Sciatic nerve (tissue), 2 donors: ENCODE measurements at regions of chr1 and their contacts with region 1.

Region 1: DNA sequence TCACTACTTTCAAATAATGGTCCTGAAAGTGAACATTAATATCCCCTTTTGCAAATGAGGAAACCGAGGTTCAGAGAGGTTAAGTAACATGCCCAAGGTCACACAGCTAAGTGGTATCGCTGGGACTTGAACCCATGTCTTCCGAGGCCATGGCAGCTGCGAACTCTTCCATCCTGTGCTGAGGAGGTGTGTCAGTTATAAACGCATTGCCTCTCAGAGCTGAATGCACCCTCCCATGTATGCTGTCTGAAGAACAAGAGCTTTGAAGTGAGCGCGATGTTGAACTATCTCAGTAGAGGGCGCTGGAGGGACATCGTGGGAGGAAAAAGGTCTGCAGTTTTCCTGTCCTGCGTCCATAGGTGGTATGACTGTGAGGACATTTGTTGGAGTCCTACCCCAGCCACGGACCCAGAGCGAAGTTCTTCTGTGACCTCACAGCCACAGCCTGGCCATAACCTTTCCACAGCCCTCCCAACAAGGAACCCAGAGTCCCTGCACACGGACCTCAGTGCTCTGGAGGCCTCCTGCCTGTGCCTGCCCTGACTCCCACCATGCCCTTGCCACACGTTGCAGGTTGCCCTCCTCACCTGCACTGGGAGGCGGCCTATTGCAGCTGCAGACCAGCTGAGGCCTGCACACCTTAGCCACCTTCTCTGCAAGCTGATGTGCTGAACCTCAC is 7.5 kb downstream of the MYOC start:
- DNase-seq: peak; percentile 89
- ATAC-seq: peak; percentile 83

Region 2: DNA sequence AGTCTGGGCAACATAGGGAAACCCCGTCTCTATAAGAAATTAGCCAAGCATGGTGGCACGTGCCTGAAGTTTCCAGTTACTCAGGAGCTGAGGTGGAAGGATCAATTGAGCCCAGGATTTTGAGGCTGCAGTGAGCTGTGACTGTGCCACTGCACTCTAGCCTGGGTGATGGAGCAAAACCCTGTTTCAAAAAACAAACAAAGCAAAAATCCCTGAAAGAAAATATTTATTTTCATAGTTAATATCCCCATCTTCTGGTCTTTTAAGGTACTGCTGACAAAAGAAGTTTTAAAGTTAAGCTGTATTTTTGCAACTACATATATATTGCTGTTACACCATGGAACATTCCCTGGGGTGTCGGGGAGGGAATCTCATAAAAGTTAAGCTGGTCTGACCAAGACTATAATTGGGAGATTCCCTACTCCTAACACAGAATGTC is 70.9 kb after region 1 on chr1:
- intact Hi-C with region 1: loop called (anchors 10 kb)
- DNase-seq: no peak
- ATAC-seq: peak; percentile 68